Activated CD4-positive, alpha-beta T cell treated with anti-CD3 and anti-CD28 coated beads for 36 hours (primary cell): ENCODE measurements at regions of chr15 and their contacts with region 1.

Region 1: GRCh38 chr15:73991726-73992593 is at the start of gene STOML1:
- DNase-seq: peak; percentile 96
- ATAC-seq: peak; percentile 74
- H3K4me3 Mint-ChIP-seq: peak within 1 kb of the TSS; percentile 74
- H3K27ac Mint-ChIP-seq: peak within 1 kb of the TSS; percentile 86
- H3K4me1 Mint-ChIP-seq: peaks cover 42% of the 10 kb centered on the region
- H3K27me3 Mint-ChIP-seq: no peaks in the 10 kb centered on the region
- total RNA-seq, gene STOML1: 6.3 to 7.1 TPM

Region 2: GRCh38 chr15:72473614-72474465 is 1518.1 kb before region 1 on chr15 and contains the start of gene ARIH1:
- CTCF ChIA-PET with region 1: no interaction called
- POLR2A ChIA-PET with region 1: no interaction called
- intact Hi-C with region 1: loop called in 1 of 2 experiments (anchors 10 kb)
- DNase-seq: peak; percentile 97
- ATAC-seq: peak; percentile 78
- H3K4me3 Mint-ChIP-seq: peak within 1 kb of the TSS; percentile 92
- H3K27ac Mint-ChIP-seq: peak within 1 kb of the TSS; percentile 92
- H3K4me1 Mint-ChIP-seq: peaks cover 36% of the 10 kb centered on the region
- H3K27me3 Mint-ChIP-seq: no peaks in the 10 kb centered on the region
- total RNA-seq, gene ARIH1: 177 to 195 TPM

Region 3: DNA sequence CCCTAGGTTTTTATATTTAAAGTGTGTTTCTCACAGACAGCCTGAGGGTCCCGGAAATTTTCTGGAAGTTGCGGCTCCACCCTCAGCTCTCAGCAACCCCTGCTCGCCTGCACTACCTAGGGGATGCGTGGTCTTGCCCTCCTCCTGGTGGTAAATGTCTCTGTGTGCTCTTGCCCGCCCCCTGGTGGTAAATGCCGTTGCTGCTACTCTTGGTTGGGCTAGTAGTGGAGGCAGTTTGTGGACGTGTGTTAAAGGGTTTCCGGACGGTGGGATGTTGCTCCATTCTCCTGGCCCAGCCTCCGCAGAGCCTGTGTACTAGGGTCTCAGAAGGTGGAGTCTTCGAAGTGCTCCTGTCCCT is 27.2 kb before region 1 on chr15:
- CTCF ChIA-PET with region 1: interaction called, 57 read pairs
- POLR2A ChIA-PET with region 1: no interaction called
- intact Hi-C with region 1: loop called in 1 of 2 experiments (anchors 1 kb)
- DNase-seq: peak; percentile 93
- ATAC-seq: peak; percentile 74
- H3K4me3 Mint-ChIP-seq: peak overlapping the region; percentile 66
- H3K27ac Mint-ChIP-seq: peak overlapping the region; percentile 76
- H3K4me1 Mint-ChIP-seq: peaks cover 27% of the 10 kb centered on the region
- H3K27me3 Mint-ChIP-seq: no peaks in the 10 kb centered on the region

Region 4: GRCh38 chr15:74011610-74012009 is 19.6 kb after region 1 on chr15:
- CTCF ChIA-PET with region 1: interaction called, 54 read pairs
- POLR2A ChIA-PET with region 1: interaction called, 5 read pairs
- intact Hi-C with region 1: loop called (anchors 1 kb)
- DNase-seq: no peak
- ATAC-seq: no peak
- H3K4me3 Mint-ChIP-seq: no peak overlapping the region
- H3K27ac Mint-ChIP-seq: no peak overlapping the region
- H3K4me1 Mint-ChIP-seq: peaks cover 53% of the 10 kb centered on the region
- H3K27me3 Mint-ChIP-seq: no peaks in the 10 kb centered on the region

Region 5: GRCh38 chr15:74540761-74541493 is 549.0 kb after region 1 on chr15 and contains the start of gene ARID3B:
- CTCF ChIA-PET with region 1: no interaction called
- POLR2A ChIA-PET with region 1: no interaction called
- intact Hi-C with region 1: loop called (anchors 1 to 5 kb)
- DNase-seq: peak; percentile 99
- ATAC-seq: peak; percentile 88
- H3K4me3 Mint-ChIP-seq: peak within 1 kb of the TSS; percentile 94
- H3K27ac Mint-ChIP-seq: peak within 1 kb of the TSS; percentile 98
- H3K4me1 Mint-ChIP-seq: peaks cover 43% of the 10 kb centered on the region
- H3K27me3 Mint-ChIP-seq: peaks cover 2% of the 10 kb centered on the region
- total RNA-seq, gene ARID3B: 23.9 to 25.4 TPM

Region 6: DNA sequence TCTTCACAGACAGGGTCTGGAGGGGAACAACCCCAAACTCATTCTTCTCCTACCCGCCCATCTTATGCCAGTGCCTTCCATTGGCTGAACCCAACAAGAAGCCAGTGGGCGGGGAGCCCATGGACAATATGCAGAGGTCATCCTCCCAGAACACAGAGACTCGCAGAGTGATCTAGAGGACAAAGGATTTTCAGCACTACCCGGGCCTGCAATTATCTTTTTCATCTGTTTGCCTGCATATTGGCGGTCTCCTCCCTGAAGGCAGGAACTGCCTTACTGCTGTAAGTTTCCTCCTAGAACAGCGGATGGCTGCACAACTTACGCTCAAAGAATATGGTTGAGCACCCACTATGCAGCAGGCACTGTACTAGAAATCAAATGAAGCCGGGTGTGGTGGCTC is 747.9 kb after region 1 on chr15:
- CTCF ChIA-PET with region 1: no interaction called
- POLR2A ChIA-PET with region 1: no interaction called
- intact Hi-C with region 1: no loop called
- DNase-seq: no peak
- ATAC-seq: no peak
- H3K4me3 Mint-ChIP-seq: no peak overlapping the region
- H3K27ac Mint-ChIP-seq: no peak overlapping the region
- H3K4me1 Mint-ChIP-seq: peaks cover 9% of the 10 kb centered on the region
- H3K27me3 Mint-ChIP-seq: peaks cover 12% of the 10 kb centered on the region

Region 7: DNA sequence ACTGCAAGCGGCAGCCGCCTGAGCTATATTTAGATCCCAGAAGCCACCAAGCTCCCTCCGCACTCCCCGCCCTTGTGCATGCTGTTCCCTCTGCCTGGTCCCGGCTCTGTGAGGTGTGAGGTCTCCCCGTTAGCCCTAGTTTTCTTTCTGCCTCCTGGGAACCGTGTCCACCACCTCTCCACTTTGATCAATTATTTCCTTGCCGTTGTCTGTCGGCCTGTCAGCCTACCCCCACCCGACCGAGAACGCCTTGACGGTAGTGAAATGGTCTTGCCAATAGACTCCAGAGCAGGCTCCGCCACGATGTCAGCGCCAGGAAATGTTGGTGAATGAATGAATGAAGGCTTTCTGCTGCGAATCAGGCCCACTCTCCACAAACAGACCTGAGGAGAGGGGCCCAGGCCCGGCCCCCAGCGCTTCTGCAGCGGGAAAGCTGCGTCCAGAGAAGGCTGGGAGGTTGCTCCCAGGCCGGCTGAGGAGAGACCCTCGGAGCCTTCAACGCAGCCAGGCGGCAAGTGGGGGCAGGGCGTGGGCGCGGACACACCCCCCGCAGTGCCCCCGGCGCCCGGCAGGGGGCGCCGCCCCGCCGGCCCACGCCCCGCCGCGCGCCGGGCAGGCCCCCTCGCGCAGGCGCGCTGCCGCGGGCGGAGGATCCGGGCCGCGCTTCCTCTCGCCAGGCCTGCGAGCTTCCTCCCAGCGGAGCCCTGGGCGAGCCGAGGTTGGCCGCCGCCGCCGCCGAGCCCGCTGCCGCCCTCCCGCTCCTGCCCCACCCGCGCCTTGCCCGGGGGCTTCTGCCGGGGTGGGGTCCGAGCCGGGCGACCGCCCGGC is 789.7 kb after region 1 on chr15 and contains the start of gene CSK:
- CTCF ChIA-PET with region 1: interaction called, 4 read pairs
- POLR2A ChIA-PET with region 1: no interaction called
- intact Hi-C with region 1: loop called (anchors 5 to 10 kb)
- DNase-seq: peak; percentile 84
- ATAC-seq: peak; percentile 27
- H3K4me3 Mint-ChIP-seq: peak within 1 kb of the TSS; percentile 89
- H3K27ac Mint-ChIP-seq: peak within 1 kb of the TSS; percentile 100
- H3K4me1 Mint-ChIP-seq: peaks cover 56% of the 10 kb centered on the region
- H3K27me3 Mint-ChIP-seq: no peaks in the 10 kb centered on the region
- total RNA-seq, gene CSK: 229 to 272 TPM

Region 8: GRCh38 chr15:74873036-74873755 is 881.2 kb after region 1 on chr15 and contains the start of gene SCAMP2:
- CTCF ChIA-PET with region 1: no interaction called
- POLR2A ChIA-PET with region 1: no interaction called
- intact Hi-C with region 1: loop called in 1 of 2 experiments (anchors 10 kb)
- DNase-seq: peak; percentile 94
- ATAC-seq: peak; percentile 84
- H3K4me3 Mint-ChIP-seq: peak within 1 kb of the TSS; percentile 87
- H3K27ac Mint-ChIP-seq: peak within 1 kb of the TSS; percentile 87
- H3K4me1 Mint-ChIP-seq: peaks cover 48% of the 10 kb centered on the region
- H3K27me3 Mint-ChIP-seq: no peaks in the 10 kb centered on the region
- total RNA-seq, gene SCAMP2: 61.6 to 83.4 TPM